H1 (cell line): ENCODE measurements at regions of chr12 and their contacts with region 1.

Region 1: GRCh38 chr12:50314629-50315312 is 31.5 kb upstream of the LIMA1 start:
- DNase-seq: no peak
- H3K4me3 ChIP-seq: no peak overlapping the region
- H3K27ac ChIP-seq: no peak overlapping the region
- H3K4me1 ChIP-seq: peaks cover 0 to 3% (median 0%) of the 10 kb centered on the region in 4 experiments; a peak in 2 of 7 replicates
- H3K27me3 ChIP-seq: no peaks in the 10 kb centered on the region
- CTCF ChIP-seq: peak in 2 of 3 experiments; percentile 57 to 65; a peak in 2 of 4 replicates
- EP300 ChIP-seq: no peak
- POLR2A ChIP-seq: no peak
- RAD21 ChIP-seq: peak; percentile 86 to 87

Region 2: DNA sequence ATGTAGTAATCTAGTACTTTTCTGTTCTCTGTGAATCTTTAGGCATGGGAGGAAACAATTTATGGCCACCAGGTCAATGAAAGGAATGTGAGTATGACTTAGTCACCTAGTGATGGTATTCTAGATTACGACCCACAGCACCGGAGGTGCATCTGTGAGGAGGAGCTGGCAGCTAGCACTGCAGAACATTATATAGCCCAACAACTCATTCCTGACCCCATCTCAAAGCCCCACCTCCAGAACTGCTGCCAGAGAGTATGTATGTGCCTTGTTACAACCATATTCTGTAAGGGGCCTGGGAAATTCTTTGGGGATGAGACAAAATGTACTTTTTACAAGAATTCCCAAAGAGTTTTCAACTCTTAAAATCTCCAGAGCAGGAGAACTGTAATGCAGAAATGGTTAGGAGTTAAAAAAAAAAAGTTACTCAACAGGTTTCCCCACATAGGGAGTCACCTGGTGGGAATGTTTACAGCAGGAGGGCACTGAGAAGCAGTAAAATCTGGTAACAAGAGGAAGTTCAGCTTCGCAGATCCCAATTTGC is 112.7 kb before region 1 on chr12:
- CTCF ChIA-PET with region 1: interaction called, 14 read pairs
- POLR2A ChIA-PET with region 1: no interaction called
- DNase-seq: no peak
- H3K4me3 ChIP-seq: peak overlapping the region in 3 of 4 experiments; percentile 19 to 40 (median 23); a peak in 4 of 8 replicates
- H3K27ac ChIP-seq: peak overlapping the region; percentile 65; the same call in 1 of the 2 replicates
- H3K4me1 ChIP-seq: peaks cover 0 to 2% (median 2%) of the 10 kb centered on the region in 4 experiments; a peak in 2 of 7 replicates
- H3K27me3 ChIP-seq: no peaks in the 10 kb centered on the region
- CTCF ChIP-seq: no peak
- EP300 ChIP-seq: peak in 1 of 2 experiments; percentile 5; a peak in 1 of 3 replicates
- POLR2A ChIP-seq: no peak
- RAD21 ChIP-seq: no peak

Region 3: DNA sequence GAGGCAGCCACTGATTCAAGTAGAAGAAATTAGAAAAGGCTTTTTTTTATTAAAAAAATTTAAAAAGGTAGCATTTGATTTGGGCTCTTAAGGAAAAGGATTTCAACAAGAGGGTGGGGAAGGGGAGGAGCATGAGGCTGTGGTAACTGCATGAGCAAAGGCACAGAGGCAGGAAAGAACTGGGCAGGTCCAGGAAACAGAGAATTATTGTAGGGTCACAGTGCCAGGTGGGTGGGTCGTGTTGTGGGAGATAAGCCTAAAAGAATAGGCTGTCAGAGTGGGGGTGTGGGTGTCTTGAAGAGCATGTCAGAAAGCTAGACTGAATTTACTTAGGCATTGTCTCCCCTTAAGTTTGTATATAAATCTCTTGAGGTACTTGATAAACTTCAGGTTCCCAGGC is 39.2 kb before region 1 on chr12:
- CTCF ChIA-PET with region 1: no interaction called
- POLR2A ChIA-PET with region 1: no interaction called
- DNase-seq: no peak
- H3K4me3 ChIP-seq: no peak overlapping the region
- H3K27ac ChIP-seq: no peak overlapping the region
- H3K4me1 ChIP-seq: no peaks in the 10 kb centered on the region; a peak in 2 of 7 replicates
- H3K27me3 ChIP-seq: no peaks in the 10 kb centered on the region
- CTCF ChIP-seq: no peak
- EP300 ChIP-seq: no peak
- POLR2A ChIP-seq: no peak
- RAD21 ChIP-seq: no peak

Region 4: GRCh38 chr12:50302686-50303085 is 12.1 kb before region 1 on chr12:
- CTCF ChIA-PET with region 1: interaction called, 15 read pairs
- POLR2A ChIA-PET with region 1: no interaction called
- DNase-seq: no peak
- H3K4me3 ChIP-seq: no peak overlapping the region
- H3K27ac ChIP-seq: no peak overlapping the region
- H3K4me1 ChIP-seq: peaks cover 0 to 3% (median 0%) of the 10 kb centered on the region in 4 experiments; a peak in 1 of 7 replicates
- H3K27me3 ChIP-seq: no peaks in the 10 kb centered on the region
- CTCF ChIP-seq: no peak
- EP300 ChIP-seq: no peak
- POLR2A ChIP-seq: no peak
- RAD21 ChIP-seq: no peak

Region 5: GRCh38 chr12:50326636-50327284 is 12.0 kb after region 1 on chr12:
- CTCF ChIA-PET with region 1: interaction called, 11 read pairs
- POLR2A ChIA-PET with region 1: no interaction called
- DNase-seq: no peak
- H3K4me3 ChIP-seq: no peak overlapping the region
- H3K27ac ChIP-seq: no peak overlapping the region
- H3K4me1 ChIP-seq: no peaks in the 10 kb centered on the region
- H3K27me3 ChIP-seq: no peaks in the 10 kb centered on the region
- CTCF ChIP-seq: no peak
- EP300 ChIP-seq: no peak
- POLR2A ChIP-seq: no peak
- RAD21 ChIP-seq: no peak